Breast epithelium (tissue), 4 donors: ENCODE measurements at regions of chr4 and their contacts with region 1.

Region 1: DNA sequence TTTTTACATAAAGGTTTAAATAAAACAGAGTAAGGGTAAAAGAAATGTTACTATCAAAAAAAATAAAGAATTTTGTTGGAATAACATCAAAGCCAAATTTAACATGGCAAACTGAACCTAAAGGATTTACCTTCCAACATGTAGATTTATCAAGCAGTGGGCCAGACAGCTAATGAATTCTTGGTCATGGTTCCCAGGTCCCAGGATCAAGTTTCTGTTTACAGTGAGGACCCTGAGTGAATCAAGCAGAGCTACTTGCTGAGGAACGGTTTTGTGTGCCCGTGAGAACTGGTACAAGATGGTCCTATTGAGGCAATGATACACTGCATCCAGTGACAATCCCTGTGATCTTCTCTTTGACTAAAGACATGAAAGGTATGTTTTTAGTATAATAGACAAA is 157.1 kb downstream of the CDS1 start:
- DNase-seq: no peak
- H3K4me3 ChIP-seq: no peak overlapping the region
- H3K27ac ChIP-seq: no peak overlapping the region
- H3K4me1 ChIP-seq: no peaks in the 10 kb centered on the region
- H3K27me3 ChIP-seq: no peaks in the 10 kb centered on the region
- CTCF ChIP-seq: no peak
- POLR2A ChIP-seq: no peak

Region 2: GRCh38 chr4:84826681-84827080 is 86.6 kb after region 1 on chr4:
- intact Hi-C with region 1: no loop called
- DNase-seq: no peak
- H3K4me3 ChIP-seq: no peak overlapping the region
- H3K27ac ChIP-seq: no peak overlapping the region
- H3K4me1 ChIP-seq: no peaks in the 10 kb centered on the region
- H3K27me3 ChIP-seq: no peaks in the 10 kb centered on the region
- CTCF ChIP-seq: no peak
- POLR2A ChIP-seq: no peak

Region 3: GRCh38 chr4:84977396-84977795 is 237.3 kb after region 1 on chr4:
- intact Hi-C with region 1: loop called (anchors 5 kb)
- DNase-seq: no peak
- H3K4me3 ChIP-seq: no peak overlapping the region
- H3K27ac ChIP-seq: no peak overlapping the region
- H3K4me1 ChIP-seq: no peaks in the 10 kb centered on the region
- H3K27me3 ChIP-seq: no peaks in the 10 kb centered on the region
- CTCF ChIP-seq: no peak
- POLR2A ChIP-seq: no peak